ENCODE measurements at regions of chr16 and their contacts with region 1.

Region 1: DNA sequence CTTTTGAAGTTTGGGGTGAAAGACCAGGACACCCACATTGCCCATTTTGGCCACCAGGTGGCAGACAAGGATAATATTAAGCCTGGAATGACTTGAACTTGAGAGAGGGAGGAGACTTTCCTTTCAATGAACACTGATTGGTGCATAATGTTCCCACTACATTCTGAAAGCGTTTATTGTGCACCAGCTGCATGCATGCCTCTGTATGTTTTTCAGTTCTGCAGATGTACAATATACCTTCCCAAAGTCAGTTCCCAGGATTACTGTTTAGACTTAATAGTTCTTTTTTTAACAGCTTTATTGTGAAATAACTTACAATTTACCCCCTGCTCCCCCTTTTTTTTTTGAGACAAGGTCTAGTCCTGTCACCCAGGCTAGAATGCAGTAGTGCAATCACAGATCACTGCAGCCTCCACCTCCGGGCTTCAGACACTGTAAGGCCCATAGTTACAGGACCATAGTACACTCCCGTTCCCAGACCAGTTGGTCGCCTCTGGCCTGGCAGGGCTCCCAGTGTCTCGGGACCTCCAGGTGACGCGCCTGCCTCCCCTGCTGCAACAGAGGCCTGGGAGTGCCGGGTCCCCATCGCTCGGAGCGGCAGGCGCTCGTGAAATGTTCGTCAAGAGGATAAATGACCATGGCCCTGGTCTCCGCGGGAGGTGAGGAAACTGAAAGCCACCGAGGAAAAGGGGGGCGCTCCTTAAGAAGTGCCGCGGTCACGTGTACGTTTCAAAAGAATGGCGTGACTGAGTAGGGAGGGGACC is 12.2 kb downstream of the CES2 start:
- DNase-seq: peak; percentile 81 to 89 (median 86)
- ATAC-seq: peak; percentile 94
- H3K4me3 ChIP-seq: no peak overlapping the region
- H3K27ac ChIP-seq: no peak overlapping the region
- H3K4me1 ChIP-seq: peaks cover 0 to 16% of the 10 kb centered on the region in 2 experiments; a peak in 1 of 5 replicates
- H3K27me3 ChIP-seq: no peaks in the 10 kb centered on the region
- CTCF ChIP-seq: peak; percentile 76 to 94 (median 92)
- EP300 ChIP-seq: no peak
- POLR2A ChIP-seq: no peak
- RAD21 ChIP-seq: peak; percentile 72 to 83

Region 2: GRCh38 chr16:66650707-66651473 is 296.6 kb before region 1 on chr16:
- CTCF ChIA-PET with region 1: no interaction called
- POLR2A ChIA-PET with region 1: no interaction called
- in situ Hi-C with region 1: no loop called
- intact Hi-C with region 1: no loop called
- DNase-seq: peak; percentile 74 to 88 (median 78)
- ATAC-seq: peak; percentile 99
- H3K4me3 ChIP-seq: no peak overlapping the region
- H3K27ac ChIP-seq: no peak overlapping the region
- H3K4me1 ChIP-seq: peaks cover 0 to 7% of the 10 kb centered on the region in 2 experiments; a peak in 3 of 5 replicates
- H3K27me3 ChIP-seq: no peaks in the 10 kb centered on the region
- CTCF ChIP-seq: peak; percentile 92 to 97 (median 95)
- EP300 ChIP-seq: no peak
- POLR2A ChIP-seq: no peak
- RAD21 ChIP-seq: peak; percentile 31 to 54; a peak in 3 of 4 replicates

Region 3: DNA sequence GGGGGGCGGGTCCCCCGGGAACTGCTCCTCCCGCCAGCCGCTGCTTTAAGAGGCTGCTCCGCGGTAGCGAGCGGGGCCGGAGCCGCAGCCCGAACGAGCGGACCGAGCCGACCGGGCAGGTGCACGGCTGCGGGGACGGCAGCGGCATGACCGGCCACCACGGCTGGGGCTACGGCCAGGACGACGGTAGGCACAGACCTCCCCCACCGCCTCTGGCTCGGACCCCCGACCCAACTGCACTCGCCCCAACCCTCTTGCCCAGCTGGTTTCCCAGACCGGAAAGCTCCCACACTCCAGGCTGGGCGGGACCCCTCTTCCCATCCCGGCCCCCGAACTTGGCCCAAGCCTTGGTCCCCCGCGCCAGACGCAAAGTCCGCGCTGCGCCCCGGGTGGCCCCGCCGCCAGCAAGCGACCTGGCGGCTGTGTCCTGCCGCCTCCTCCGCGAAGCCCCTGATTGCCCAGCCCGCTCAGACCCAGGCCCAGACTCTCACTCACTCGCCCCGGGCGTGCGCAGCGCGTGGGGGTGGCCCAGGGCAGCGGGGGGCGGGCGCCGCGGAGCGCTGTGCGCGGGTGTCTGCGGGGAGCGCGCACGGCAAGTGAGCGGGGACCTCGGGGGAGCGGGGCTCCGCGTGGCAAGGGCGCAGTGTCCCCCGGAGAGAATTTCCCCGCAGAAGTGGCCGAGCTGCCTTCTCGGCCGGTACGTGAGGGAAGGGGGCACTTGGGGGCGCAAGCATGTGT is 103.0 kb before region 1 on chr16 and contains the start of gene CA7:
- CTCF ChIA-PET with region 1: no interaction called
- POLR2A ChIA-PET with region 1: no interaction called
- in situ Hi-C with region 1: no loop called
- intact Hi-C with region 1: no loop called
- DNase-seq: peak in 3 of 4 experiments; percentile 10 to 61 (median 57)
- ATAC-seq: no peak
- H3K4me3 ChIP-seq: no peak within 1 kb of the TSS
- H3K27ac ChIP-seq: no peak within 1 kb of the TSS
- H3K4me1 ChIP-seq: peaks cover 12 to 22% of the 10 kb centered on the region in 2 experiments; a peak in 3 of 5 replicates
- H3K27me3 ChIP-seq: peaks cover 18 to 20% of the 10 kb centered on the region in 2 experiments; a peak in 4 of 5 replicates
- CTCF ChIP-seq: no peak
- EP300 ChIP-seq: no peak
- POLR2A ChIP-seq: no peak
- RAD21 ChIP-seq: no peak
- polyA plus RNA-seq, gene CA7: 0.03 TPM in 1 of 2 experiments, not detected in the other

Region 4: GRCh38 chr16:67104061-67104460 is 156.6 kb after region 1 on chr16:
- CTCF ChIA-PET with region 1: interaction called, 9 read pairs
- POLR2A ChIA-PET with region 1: no interaction called
- in situ Hi-C with region 1: no loop called
- intact Hi-C with region 1: loop called (anchors 5 kb)
- DNase-seq: peak in 2 of 4 experiments; percentile 41 to 59
- ATAC-seq: peak; percentile 96
- H3K4me3 ChIP-seq: no peak overlapping the region
- H3K27ac ChIP-seq: no peak overlapping the region
- H3K4me1 ChIP-seq: peaks cover 2 to 3% of the 10 kb centered on the region in 2 experiments; a peak in 4 of 5 replicates
- H3K27me3 ChIP-seq: no peaks in the 10 kb centered on the region
- CTCF ChIP-seq: peak; percentile 53 to 60 (median 56); a peak in 5 of 6 replicates
- EP300 ChIP-seq: no peak
- POLR2A ChIP-seq: no peak
- RAD21 ChIP-seq: peak in 1 of 2 experiments; percentile 46; a peak in 2 of 4 replicates